Testis (tissue), 5 donors: ENCODE measurements at regions of chr7 and their contacts with region 1.

Region 1: GRCh38 chr7:24819916-24820689 is 62.8 kb upstream of the GSDME start:
- DNase-seq: peak; percentile 91
- H3K4me3 ChIP-seq: no peak overlapping the region
- H3K27ac ChIP-seq: no peak overlapping the region
- H3K4me1 ChIP-seq: no peaks in the 10 kb centered on the region
- H3K27me3 ChIP-seq: no peaks in the 10 kb centered on the region
- CTCF ChIP-seq: peak; percentile 67 to 78 (median 76)
- POLR2A ChIP-seq: no peak

Region 2: DNA sequence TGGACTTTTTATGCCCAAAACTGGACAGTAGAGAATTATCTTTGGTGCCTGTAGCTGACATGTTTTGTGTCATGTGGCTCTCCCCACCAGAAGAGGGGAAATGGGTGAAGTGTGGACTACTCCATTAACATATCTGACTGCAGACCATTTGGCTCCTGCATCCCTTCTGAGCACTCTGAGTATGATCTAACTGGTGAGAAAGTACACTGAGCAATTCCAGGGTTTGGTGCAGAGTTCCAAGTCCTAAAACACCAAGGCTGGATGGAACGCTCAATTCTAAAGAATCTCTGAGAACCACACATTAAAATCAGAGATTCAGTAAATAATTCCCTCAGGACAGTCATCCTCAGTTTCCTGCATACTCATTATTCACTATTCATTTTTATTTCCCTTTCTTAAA is 182.7 kb after region 1 on chr7:
- intact Hi-C with region 1: no loop called
- DNase-seq: no peak
- H3K4me3 ChIP-seq: no peak overlapping the region
- H3K27ac ChIP-seq: no peak overlapping the region
- H3K4me1 ChIP-seq: no peaks in the 10 kb centered on the region
- H3K27me3 ChIP-seq: no peaks in the 10 kb centered on the region
- CTCF ChIP-seq: no peak
- POLR2A ChIP-seq: no peak

Region 3: GRCh38 chr7:25069900-25070443 is 249.9 kb after region 1 on chr7:
- intact Hi-C with region 1: loop called (anchors 5 kb)
- DNase-seq: peak; percentile 75
- H3K4me3 ChIP-seq: peak overlapping the region in 1 of 2 donors; percentile 11
- H3K27ac ChIP-seq: no peak overlapping the region
- H3K4me1 ChIP-seq: no peaks in the 10 kb centered on the region
- H3K27me3 ChIP-seq: no peaks in the 10 kb centered on the region
- CTCF ChIP-seq: peak; percentile 74 to 94 (median 86)
- POLR2A ChIP-seq: no peak

Region 4: DNA sequence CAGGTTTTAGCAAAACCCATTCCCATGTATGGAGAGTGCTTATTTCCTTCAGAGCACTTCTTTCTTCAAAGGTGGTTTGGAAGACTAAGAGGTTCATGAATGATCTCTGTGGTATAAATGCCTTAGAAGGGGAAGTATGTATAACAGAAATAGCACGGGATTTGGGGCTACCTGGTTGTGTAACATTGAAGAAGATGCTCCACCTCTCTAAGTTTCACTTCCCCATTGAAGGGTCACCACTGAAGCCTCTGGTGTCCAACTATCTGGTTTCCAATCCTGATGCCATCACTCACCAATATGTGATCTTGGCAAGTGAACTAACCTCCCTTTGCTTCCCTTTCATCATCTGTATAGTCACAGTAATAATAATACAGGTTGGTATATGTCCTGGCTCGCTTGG is 267.8 kb after region 1 on chr7:
- intact Hi-C with region 1: no loop called
- DNase-seq: no peak
- H3K4me3 ChIP-seq: no peak overlapping the region
- H3K27ac ChIP-seq: no peak overlapping the region
- H3K4me1 ChIP-seq: no peaks in the 10 kb centered on the region
- H3K27me3 ChIP-seq: no peaks in the 10 kb centered on the region
- CTCF ChIP-seq: no peak
- POLR2A ChIP-seq: no peak

Region 5: GRCh38 chr7:25215694-25216335 is 395.7 kb after region 1 on chr7:
- intact Hi-C with region 1: no loop called
- DNase-seq: no peak
- H3K4me3 ChIP-seq: no peak overlapping the region
- H3K27ac ChIP-seq: no peak overlapping the region
- H3K4me1 ChIP-seq: no peaks in the 10 kb centered on the region
- H3K27me3 ChIP-seq: no peaks in the 10 kb centered on the region
- CTCF ChIP-seq: no peak
- POLR2A ChIP-seq: no peak